PC-3 (cell line): ENCODE measurements at regions of chr1 and their contacts with region 1.

Region 1: DNA sequence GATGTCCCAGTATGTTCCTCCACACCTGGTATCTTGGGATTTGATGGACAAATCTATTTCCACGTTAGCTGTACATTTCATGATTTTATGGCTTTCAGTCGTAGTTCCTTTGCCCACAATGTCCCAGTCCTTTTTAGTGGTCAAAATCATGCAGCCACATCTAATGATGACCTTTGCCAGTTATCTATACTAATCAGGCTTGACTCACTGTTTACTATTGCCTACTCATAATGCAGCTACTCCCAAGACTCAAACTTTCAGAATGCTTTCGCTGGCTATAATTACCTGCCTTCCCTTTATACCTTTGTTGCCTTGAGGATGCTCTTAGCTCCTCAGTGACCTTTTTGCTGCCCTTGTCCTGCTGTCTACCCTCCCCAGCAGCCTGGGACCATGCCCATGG is 6.4 kb downstream of the NOS1AP start:
- DNase-seq: peak; percentile 87
- ATAC-seq: peak; percentile 91
- H3K4me3 ChIP-seq: peak overlapping the region; percentile 6; the same call in 1 of the 2 replicates
- H3K27ac ChIP-seq: 0 out of 2 replicates have a peak overlapping the region, but pooled peaks have one; percentile 6
- H3K4me1 ChIP-seq: peaks cover 23% of the 10 kb centered on the region
- H3K27me3 ChIP-seq: no peaks in the 10 kb centered on the region
- CTCF ChIP-seq: no peak

Region 2: GRCh38 chr1:160539990-160540858 is 1535.6 kb before region 1 on chr1:
- CTCF ChIA-PET with region 1: no interaction called
- POLR2A ChIA-PET with region 1: interaction called, 35 read pairs
- intact Hi-C with region 1: no loop called
- DNase-seq: no peak
- ATAC-seq: no peak
- H3K4me3 ChIP-seq: no peak overlapping the region
- H3K27ac ChIP-seq: no peak overlapping the region
- H3K4me1 ChIP-seq: no peaks in the 10 kb centered on the region
- H3K27me3 ChIP-seq: peaks cover 40% of the 10 kb centered on the region
- CTCF ChIP-seq: no peak

Region 3: GRCh38 chr1:162062542-162063015 is 13.3 kb before region 1 on chr1:
- CTCF ChIA-PET with region 1: interaction called, 14 read pairs
- POLR2A ChIA-PET with region 1: no interaction called
- intact Hi-C with region 1: no loop called
- DNase-seq: no peak
- ATAC-seq: peak; percentile 83
- H3K4me3 ChIP-seq: no peak overlapping the region
- H3K27ac ChIP-seq: no peak overlapping the region
- H3K4me1 ChIP-seq: no peaks in the 10 kb centered on the region
- H3K27me3 ChIP-seq: no peaks in the 10 kb centered on the region
- CTCF ChIP-seq: no peak